ENCODE measurements at regions of chr11 and their contacts with region 1.

Region 1: DNA sequence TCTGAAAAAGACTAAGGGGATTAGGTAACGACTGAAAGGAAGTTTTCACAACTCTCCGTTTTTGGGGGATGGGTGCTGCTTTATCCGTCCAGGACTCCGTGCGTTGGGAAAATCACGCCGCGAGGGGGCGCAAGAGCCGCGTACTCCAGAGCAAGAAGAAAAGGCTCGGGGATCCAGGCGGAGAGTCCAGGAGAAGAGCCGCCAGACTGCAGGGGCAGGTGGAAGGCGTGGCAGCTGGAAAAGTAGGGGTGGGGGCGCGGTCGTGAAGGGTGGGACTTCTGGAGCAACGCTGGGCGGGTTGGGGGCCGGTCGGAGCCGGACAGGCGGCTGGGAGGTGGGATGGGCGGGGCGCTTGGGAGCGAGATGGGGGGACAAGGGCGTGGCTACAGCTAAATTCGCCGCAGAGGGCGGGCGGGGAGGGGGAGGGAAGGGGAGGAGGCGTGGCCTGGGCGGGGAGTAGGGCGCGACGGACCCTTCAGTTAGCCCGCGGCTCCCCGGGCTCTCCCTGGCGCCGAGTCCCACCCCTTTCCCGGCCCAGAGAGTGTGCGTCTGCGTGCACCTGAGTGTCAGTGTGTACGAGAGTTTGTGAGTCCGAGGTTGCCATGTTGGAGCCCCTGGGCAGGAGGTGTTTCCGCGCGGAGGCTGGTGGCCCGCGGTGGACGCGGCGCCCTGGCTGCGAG is 613 bp upstream of the ARHGEF17 start:
- DNase-seq: peak; percentile 97
- H3K4me3 Mint-ChIP-seq: peak overlapping the region; percentile 73
- H3K27ac Mint-ChIP-seq: peak overlapping the region; percentile 63
- H3K4me1 Mint-ChIP-seq: peaks cover 8% of the 10 kb centered on the region
- H3K27me3 Mint-ChIP-seq: peaks cover 4% of the 10 kb centered on the region
- CTCF ChIP-seq: peak; percentile 84

Region 2: GRCh38 chr11:73295231-73295995 is 12.1 kb before region 1 on chr11:
- CTCF ChIA-PET with region 1: interaction called, 18 read pairs
- intact Hi-C with region 1: no loop called
- DNase-seq: peak; percentile 83
- H3K4me3 Mint-ChIP-seq: no peak overlapping the region
- H3K27ac Mint-ChIP-seq: no peak overlapping the region
- H3K4me1 Mint-ChIP-seq: no peaks in the 10 kb centered on the region
- H3K27me3 Mint-ChIP-seq: peaks cover 34% of the 10 kb centered on the region
- CTCF ChIP-seq: peak; percentile 93

Region 3: GRCh38 chr11:73326929-73327811 is 19.7 kb after region 1 on chr11:
- CTCF ChIA-PET with region 1: interaction called, 14 read pairs
- intact Hi-C with region 1: no loop called
- DNase-seq: no peak
- H3K4me3 Mint-ChIP-seq: no peak overlapping the region
- H3K27ac Mint-ChIP-seq: no peak overlapping the region
- H3K4me1 Mint-ChIP-seq: peaks cover 11% of the 10 kb centered on the region
- H3K27me3 Mint-ChIP-seq: no peaks in the 10 kb centered on the region
- CTCF ChIP-seq: no peak

Region 4: DNA sequence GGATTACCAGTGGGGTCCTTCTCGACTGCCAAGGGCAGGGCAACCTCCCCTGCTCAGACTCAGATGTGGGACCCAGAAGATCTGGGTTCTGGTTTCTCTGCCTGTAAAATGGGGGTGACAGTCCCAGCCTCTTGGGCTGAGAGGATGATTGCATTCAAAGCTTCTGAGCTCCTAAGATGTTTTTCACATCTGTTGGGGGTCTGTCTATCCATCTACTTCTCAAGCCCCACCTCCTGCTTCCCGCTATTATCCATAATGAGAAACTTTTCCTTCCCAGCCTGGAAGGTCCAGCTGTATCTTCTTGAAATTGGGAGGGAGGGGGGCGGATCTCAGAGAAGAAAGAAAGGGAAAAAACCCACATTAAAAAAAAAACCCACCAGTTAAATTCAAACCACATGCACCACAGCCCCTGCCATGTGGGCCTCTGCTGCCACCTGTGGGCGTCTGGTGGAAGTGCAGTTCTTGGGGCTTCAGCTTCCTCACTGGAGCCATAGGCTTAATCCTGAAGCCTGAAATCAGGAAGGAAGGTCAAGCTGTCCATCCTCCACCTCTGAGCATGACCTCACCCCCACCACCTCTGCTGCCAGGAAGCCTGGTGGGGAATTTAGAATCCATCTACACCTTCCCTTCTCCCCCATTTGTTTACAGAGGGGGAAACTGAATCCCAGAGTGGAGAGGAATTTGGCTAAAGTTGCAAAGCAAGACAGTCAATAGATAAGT is 27.9 kb after region 1 on chr11:
- CTCF ChIA-PET with region 1: interaction called, 41 read pairs
- intact Hi-C with region 1: loop called (anchors 1 kb)
- DNase-seq: peak; percentile 90
- H3K4me3 Mint-ChIP-seq: no peak overlapping the region
- H3K27ac Mint-ChIP-seq: no peak overlapping the region
- H3K4me1 Mint-ChIP-seq: peaks cover 15% of the 10 kb centered on the region
- H3K27me3 Mint-ChIP-seq: no peaks in the 10 kb centered on the region
- CTCF ChIP-seq: peak; percentile 93

Region 5: GRCh38 chr11:73350908-73351636 is 43.6 kb after region 1 on chr11:
- CTCF ChIA-PET with region 1: interaction called, 11 read pairs
- intact Hi-C with region 1: no loop called
- DNase-seq: peak; percentile 61
- H3K4me3 Mint-ChIP-seq: no peak overlapping the region
- H3K27ac Mint-ChIP-seq: no peak overlapping the region
- H3K4me1 Mint-ChIP-seq: no peaks in the 10 kb centered on the region
- H3K27me3 Mint-ChIP-seq: no peaks in the 10 kb centered on the region
- CTCF ChIP-seq: peak; percentile 88

Region 6: GRCh38 chr11:73393479-73394380 is 86.3 kb after region 1 on chr11:
- CTCF ChIA-PET with region 1: interaction called, 10 read pairs
- intact Hi-C with region 1: loop called (anchors 5 kb)
- DNase-seq: peak; percentile 79
- H3K4me3 Mint-ChIP-seq: no peak overlapping the region
- H3K27ac Mint-ChIP-seq: no peak overlapping the region
- H3K4me1 Mint-ChIP-seq: peaks cover 12% of the 10 kb centered on the region
- H3K27me3 Mint-ChIP-seq: no peaks in the 10 kb centered on the region
- CTCF ChIP-seq: peak; percentile 71

Measured in Calu3 (cell line).